Activated CD4-positive, alpha-beta T cell treated with anti-CD3 and anti-CD28 coated beads, Interleukin-2, amount 10 ng/mL, durations not matched to agents 24 days and 14 days (primary cell): ENCODE measurements at regions of chr3 and their contacts with region 1.

Region 1: GRCh38 chr3:112973325-112974177 is 1.4 kb downstream of the CD200R1 start:
- DNase-seq: peak; percentile 86
- H3K4me3 Mint-ChIP-seq: peak overlapping the region; percentile 85
- H3K27ac Mint-ChIP-seq: peak overlapping the region; percentile 93
- H3K4me1 Mint-ChIP-seq: peaks cover 67% of the 10 kb centered on the region
- H3K27me3 Mint-ChIP-seq: no peaks in the 10 kb centered on the region

Region 2: GRCh38 chr3:112561731-112562688 is 411.5 kb before region 1 on chr3 and contains the starts of genes ATG3 and SLC35A5:
- intact Hi-C with region 1: loop called (anchors 1 kb)
- DNase-seq: peak; percentile 100
- H3K4me3 Mint-ChIP-seq: peak within 1 kb of the TSS; percentile 98
- H3K27ac Mint-ChIP-seq: peak within 1 kb of the TSS; percentile 99
- H3K4me1 Mint-ChIP-seq: peaks cover 24% of the 10 kb centered on the region
- H3K27me3 Mint-ChIP-seq: no peaks in the 10 kb centered on the region
- total RNA-seq, gene ATG3: 66.9 and 69.1 TPM in 2 replicates
- total RNA-seq, gene SLC35A5: 15.5 and 16.3 TPM in 2 replicates

Region 3: GRCh38 chr3:112858410-112859069 is 115.0 kb before region 1 on chr3:
- intact Hi-C with region 1: loop called (anchors 1 kb)
- DNase-seq: no peak
- H3K4me3 Mint-ChIP-seq: no peak overlapping the region
- H3K27ac Mint-ChIP-seq: peak overlapping the region; percentile 69
- H3K4me1 Mint-ChIP-seq: peaks cover 20% of the 10 kb centered on the region
- H3K27me3 Mint-ChIP-seq: no peaks in the 10 kb centered on the region

Region 4: DNA sequence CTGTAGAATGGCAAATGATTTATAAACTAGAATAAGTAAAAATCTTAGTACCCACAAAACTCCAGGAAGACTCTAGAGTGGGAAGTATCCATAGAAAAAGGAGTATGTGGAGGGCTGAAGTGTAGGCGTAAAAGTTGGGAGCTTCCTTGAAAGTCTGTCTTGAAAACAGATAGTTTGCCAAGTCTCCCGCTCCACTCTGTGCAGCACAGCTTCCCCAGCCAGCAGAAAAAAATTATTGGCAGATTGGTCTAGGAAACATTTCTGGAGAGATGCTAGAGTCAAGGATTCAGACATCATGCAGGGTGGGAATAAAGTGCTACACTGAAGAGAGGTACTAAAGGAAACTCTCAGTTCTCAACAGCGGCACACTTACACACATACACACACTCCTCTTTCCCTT is 73.4 kb before region 1 on chr3:
- intact Hi-C with region 1: no loop called
- DNase-seq: no peak
- H3K4me3 Mint-ChIP-seq: no peak overlapping the region
- H3K27ac Mint-ChIP-seq: no peak overlapping the region
- H3K4me1 Mint-ChIP-seq: no peaks in the 10 kb centered on the region
- H3K27me3 Mint-ChIP-seq: no peaks in the 10 kb centered on the region

Region 5: GRCh38 chr3:112990672-112991602 is 17.4 kb after region 1 on chr3 and contains the start of gene GTPBP8:
- intact Hi-C with region 1: loop called (anchors 1 kb)
- DNase-seq: peak; percentile 95
- H3K4me3 Mint-ChIP-seq: peak within 1 kb of the TSS; percentile 88
- H3K27ac Mint-ChIP-seq: peak within 1 kb of the TSS; percentile 97
- H3K4me1 Mint-ChIP-seq: peaks cover 56% of the 10 kb centered on the region
- H3K27me3 Mint-ChIP-seq: no peaks in the 10 kb centered on the region
- total RNA-seq, gene GTPBP8: 18.4 and 18.9 TPM in 2 replicates